Pancreas (tissue), 10 donors: ENCODE measurements at regions of chr10 and their contacts with region 1.

Region 1: GRCh38 chr10:67779465-67780203 is 58.4 kb downstream of the DNAJC12 start:
- DNase-seq: peak in 3 of 6 donors; percentile 54 to 73 (median 63)
- ATAC-seq: peak; percentile 80 to 95 (median 92)
- H3K4me3 ChIP-seq: no peak overlapping the region
- H3K27ac ChIP-seq: no peak overlapping the region
- H3K4me1 ChIP-seq: no peaks in the 10 kb centered on the region
- H3K27me3 ChIP-seq: no peaks in the 10 kb centered on the region
- CTCF ChIP-seq: peak; percentile 61 to 71 (median 68)

Region 2: DNA sequence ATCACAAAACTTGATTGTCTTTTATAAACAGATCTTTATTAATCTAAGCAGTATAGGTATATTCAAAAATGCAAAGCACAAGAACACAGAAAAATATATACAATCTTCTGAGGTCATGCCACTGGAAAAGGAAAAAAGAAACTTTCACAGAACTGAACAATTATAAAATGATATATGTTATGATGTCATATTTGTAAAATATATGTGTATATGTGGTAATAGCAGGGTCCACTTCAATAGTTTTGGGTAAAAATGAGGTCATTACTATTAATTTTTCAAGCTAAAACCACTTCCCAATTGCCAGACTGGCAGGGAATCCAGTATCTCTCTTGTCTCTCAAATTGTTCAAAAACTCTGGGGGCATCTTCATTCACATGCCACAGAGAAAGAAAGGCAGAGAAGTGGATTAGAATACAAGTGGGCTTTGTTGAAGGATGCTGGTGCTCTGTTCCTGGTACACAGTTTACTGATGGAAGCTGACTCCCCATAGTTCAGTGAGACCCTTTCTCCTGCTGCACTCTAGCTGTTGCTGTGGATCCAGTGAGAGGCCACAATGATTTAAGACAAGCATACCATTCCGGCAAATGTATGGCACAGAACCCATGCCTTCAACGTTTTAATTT is 103.3 kb before region 1 on chr10:
- intact Hi-C with region 1: loop called in 1 of 3 experiments (anchors 10 kb)
- DNase-seq: no peak
- ATAC-seq: no peak
- H3K4me3 ChIP-seq: no peak overlapping the region
- H3K27ac ChIP-seq: no peak overlapping the region
- H3K4me1 ChIP-seq: no peaks in the 10 kb centered on the region
- H3K27me3 ChIP-seq: no peaks in the 10 kb centered on the region
- CTCF ChIP-seq: no peak

Region 3: DNA sequence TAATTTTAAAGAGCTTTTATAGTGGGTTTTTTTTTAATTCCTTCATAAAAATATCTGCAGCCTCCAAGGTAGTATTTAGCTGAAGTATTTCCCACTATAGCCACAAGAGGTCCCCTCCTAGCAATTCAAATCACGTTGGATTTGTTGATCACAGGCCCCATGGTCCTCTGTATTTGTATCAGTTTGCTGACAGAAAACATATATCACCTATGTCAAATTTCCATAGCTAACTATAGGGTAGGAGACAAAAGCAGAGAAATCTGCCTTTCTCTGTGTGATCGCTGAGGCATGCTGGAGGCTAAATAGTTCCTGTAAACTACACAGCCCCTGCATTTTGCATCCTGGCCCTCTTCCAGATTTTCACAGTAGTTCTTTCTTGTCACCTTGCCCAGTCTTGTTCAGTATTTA is 81.9 kb before region 1 on chr10:
- intact Hi-C with region 1: loop called in 1 of 3 experiments (anchors 5 kb)
- DNase-seq: peak in 1 of 6 donors; percentile 12
- ATAC-seq: peak; percentile 77 to 92 (median 86)
- H3K4me3 ChIP-seq: no peak overlapping the region
- H3K27ac ChIP-seq: no peak overlapping the region
- H3K4me1 ChIP-seq: no peaks in the 10 kb centered on the region
- H3K27me3 ChIP-seq: no peaks in the 10 kb centered on the region
- CTCF ChIP-seq: peak; percentile 19 to 57 (median 52)